ENCODE measurements at regions of chr2 and their contacts with region 1.

Region 1: GRCh38 chr2:178251151-178251955 is 57.0 kb downstream of the OSBPL6 start:
- DNase-seq: no peak
- H3K4me3 ChIP-seq: peak overlapping the region in 2 of 59 donors; percentile 12
- H3K27ac ChIP-seq: peak overlapping the region in 8 of 59 donors; percentile 0 to 45 (median 32)
- H3K27me3 ChIP-seq: no peaks in the 10 kb centered on the region
- CTCF ChIP-seq: no peak

Region 2: DNA sequence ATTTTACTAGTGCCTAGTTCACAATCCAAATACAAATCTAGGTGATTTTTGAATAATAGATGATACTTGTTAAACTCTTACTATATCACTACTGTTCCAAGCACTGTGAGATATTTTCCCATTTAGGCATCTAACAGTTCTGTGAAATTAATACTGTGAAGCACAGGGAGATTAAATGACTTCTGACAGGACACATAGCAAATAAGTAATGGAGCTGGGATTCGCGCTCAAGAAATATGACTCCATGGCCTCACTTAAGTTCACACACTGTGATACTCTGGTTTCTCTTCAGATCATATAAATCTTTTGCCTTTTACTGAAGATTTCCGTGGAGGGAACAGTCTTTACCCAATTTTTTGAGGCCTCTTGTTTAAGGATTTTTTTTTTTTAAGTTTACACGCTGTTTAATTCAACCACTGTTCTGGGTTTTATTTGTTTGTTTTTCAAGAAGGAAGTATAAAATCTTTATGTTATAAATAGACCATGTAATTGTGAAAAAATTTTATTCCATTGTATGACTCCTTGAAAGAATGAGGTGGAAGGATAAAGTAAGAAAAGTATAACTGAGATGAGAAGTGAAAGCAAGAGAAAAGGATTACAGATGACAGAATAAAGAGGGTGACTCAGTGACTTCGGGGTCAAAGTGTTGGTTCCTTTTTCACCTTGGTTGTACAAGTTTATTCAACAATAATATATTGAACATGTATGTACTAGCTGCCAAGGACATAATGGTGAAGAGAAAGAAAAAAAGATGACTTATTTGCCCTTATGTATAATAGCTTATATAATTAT is 108.9 kb before region 1 on chr2:
- intact Hi-C with region 1: no loop called
- DNase-seq: no peak
- H3K4me3 ChIP-seq: no peak overlapping the region
- H3K27ac ChIP-seq: no peak overlapping the region
- H3K27me3 ChIP-seq: peaks cover 0 to 23% (median 0%) of the 10 kb centered on the region in 45 donors
- CTCF ChIP-seq: no peak

Region 3: DNA sequence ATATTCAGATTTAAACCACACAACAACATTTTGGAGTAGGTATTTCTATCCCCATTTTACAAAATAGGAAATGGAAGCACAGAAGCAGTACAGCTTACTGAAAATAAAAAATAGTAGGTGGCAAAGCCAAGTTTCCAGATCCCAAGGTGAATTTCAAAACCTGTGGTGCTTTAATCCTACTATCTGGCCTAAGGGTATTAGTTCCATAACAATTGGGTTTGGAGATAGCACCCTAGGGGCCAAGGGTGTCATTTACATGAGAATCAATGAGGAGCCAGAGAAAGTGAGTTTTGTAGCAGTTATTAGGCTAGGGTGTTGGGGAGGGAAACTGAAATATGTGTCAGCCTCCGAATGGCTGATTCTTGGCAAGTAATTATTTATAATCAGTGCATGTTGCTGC is 32.1 kb before region 1 on chr2:
- intact Hi-C with region 1: loop called in 1 of 2 experiments (anchors 5 kb)
- DNase-seq: no peak
- H3K4me3 ChIP-seq: no peak overlapping the region
- H3K27ac ChIP-seq: no peak overlapping the region
- H3K27me3 ChIP-seq: no peaks in the 10 kb centered on the region
- CTCF ChIP-seq: no peak

Region 4: GRCh38 chr2:178317811-178318210 is 66.5 kb after region 1 on chr2:
- intact Hi-C with region 1: no loop called
- DNase-seq: no peak
- H3K4me3 ChIP-seq: no peak overlapping the region
- H3K27ac ChIP-seq: no peak overlapping the region
- H3K27me3 ChIP-seq: no peaks in the 10 kb centered on the region
- CTCF ChIP-seq: no peak

Region 5: DNA sequence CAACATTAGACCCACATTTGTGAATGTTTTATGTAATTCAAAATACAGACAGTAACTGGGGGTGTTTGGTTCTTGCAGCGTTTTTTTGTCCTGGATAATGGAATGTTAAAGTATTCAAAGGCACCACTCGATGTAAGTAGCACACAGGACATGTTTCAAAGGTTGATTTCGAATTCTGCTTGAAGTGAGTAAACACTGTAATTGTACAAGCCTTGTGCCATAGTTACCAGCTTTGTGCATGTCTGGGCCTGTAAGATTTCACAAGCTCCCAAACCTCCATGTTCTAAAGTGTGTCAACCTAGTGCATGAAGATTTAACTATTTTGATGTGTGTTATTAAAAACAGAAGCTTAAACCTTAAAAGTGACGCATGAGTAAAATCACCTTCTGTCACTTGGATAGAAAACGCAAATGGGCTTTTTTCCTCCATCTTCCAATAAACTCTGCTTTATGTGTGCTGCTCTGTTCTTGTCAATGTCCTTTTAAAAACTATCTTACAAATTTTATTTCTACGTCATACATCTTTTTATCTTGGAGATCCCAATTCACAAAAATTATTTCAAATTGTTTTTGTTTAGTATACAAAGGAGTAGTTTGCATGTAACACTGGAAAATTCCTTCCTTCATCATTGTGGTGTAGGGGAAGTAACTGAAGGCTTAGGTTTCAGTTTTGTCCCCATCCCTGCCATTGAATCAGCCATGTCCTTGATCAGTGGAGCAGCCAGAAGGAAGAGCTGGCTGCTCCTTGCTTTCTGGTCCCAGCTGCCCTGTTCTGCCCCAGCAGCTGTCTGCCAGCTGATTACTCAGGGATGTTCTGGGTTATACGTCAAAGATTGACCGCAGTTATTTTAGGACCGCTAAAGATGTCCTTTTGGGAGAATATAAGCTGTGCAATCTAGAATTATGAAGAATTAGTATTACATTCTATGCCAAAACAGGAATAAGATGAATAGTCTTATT is 80.4 kb after region 1 on chr2:
- intact Hi-C with region 1: no loop called
- DNase-seq: no peak
- H3K4me3 ChIP-seq: no peak overlapping the region
- H3K27ac ChIP-seq: peak overlapping the region in 3 of 59 donors; percentile 2 to 10 (median 2)
- H3K27me3 ChIP-seq: no peaks in the 10 kb centered on the region
- CTCF ChIP-seq: no peak

Measured in dorsolateral prefrontal cortex (tissue), 120 donors.